ENCODE measurements at regions of chr15 and their contacts with region 1.

Region 1: GRCh38 chr15:92383519-92384326 is 10.0 kb upstream of the ST8SIA2 start:
- DNase-seq: no peak
- ATAC-seq: no peak
- H3K4me3 Mint-ChIP-seq: no peak overlapping the region
- H3K27ac Mint-ChIP-seq: no peak overlapping the region
- H3K4me1 Mint-ChIP-seq: no peaks in the 10 kb centered on the region
- H3K27me3 Mint-ChIP-seq: peaks cover 13% of the 10 kb centered on the region
- CTCF ChIP-seq: no peak

Region 2: DNA sequence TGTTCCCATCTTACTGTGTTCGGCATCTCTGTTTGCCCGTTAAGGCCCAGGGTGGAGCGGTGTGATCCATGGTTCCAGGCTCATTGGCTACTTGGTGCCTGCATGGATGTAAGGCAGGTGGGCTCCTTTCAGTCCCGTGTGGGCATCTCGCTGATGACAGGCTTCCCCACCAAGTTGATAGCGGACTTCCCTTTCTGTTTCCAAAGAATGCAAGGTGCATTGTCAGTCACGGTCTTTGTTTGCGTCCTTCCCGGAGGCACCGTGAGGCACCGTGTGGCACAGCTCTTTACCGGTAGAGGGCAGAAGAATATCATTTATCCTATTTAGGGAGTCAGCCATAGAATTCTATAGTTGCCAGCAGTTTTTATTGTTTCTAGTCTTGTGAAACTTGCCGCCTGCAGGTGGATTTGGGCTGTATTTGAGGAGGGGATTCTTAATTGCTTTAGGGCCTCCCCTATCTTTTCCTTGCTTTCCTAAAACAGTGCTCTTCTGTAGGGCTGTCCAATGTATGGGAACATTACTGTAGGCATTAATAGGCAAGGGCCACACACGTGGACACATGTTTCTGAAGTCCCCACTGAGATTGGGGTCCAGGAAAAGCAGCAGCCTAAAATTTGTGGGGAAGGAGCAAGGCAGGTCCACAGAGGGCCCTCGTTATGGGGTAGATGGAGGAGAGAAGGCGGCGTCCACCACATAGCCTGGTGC is 286.1 kb before region 1 on chr15:
- CTCF ChIA-PET with region 1: no interaction called
- POLR2A ChIA-PET with region 1: no interaction called
- intact Hi-C with region 1: loop called (anchors 5 kb)
- DNase-seq: no peak
- ATAC-seq: peak; percentile 52
- H3K4me3 Mint-ChIP-seq: no peak overlapping the region
- H3K27ac Mint-ChIP-seq: no peak overlapping the region
- H3K4me1 Mint-ChIP-seq: peaks cover 22% of the 10 kb centered on the region
- H3K27me3 Mint-ChIP-seq: no peaks in the 10 kb centered on the region
- CTCF ChIP-seq: no peak

Region 3: DNA sequence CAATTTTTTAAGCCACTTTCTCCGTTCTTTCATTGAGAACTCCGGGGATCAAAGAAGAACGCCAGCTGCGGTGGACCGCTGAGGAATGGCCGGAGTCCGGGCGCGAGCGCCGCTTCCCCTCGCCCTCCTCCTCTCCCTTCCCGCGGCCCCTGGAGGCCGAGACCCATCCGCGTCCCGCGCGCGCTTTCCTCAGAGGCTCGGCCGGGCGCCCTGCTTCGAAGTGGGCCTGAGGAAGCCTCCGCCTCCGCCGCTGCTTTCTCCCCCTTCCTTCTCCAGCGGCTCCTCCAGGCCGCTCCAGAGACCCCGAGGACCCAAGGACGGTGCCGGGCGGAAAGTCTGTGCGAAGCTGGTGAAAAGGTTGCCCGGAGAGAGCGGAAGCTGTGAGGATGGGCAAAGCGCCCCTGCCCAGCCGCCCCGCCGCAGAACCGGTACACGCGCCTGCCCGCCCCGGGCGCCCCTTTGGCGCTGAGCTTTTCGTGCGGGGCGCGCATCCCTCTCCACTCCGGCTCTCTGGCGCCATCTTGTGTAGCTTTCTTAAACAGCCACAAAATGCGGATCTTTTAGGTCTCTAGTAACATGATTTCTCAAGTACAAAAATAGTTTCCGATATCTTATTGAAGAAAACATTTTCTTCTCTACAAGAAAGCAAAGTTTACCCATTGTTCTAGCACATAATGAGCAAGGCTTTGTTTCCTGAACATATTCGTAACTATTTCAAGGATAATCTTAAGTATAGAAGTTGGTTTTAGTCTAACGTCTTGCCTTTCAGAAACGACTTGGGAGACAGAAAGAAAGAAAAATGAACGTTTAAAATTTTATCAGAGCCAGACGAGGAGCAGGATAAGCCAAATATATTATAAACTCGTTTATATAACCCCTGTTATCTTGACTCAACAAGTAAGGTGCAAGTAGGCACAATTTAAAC is 331.0 kb after region 1 on chr15:
- CTCF ChIA-PET with region 1: no interaction called
- POLR2A ChIA-PET with region 1: no interaction called
- intact Hi-C with region 1: no loop called
- DNase-seq: peak; percentile 51
- ATAC-seq: peak; percentile 82
- H3K4me3 Mint-ChIP-seq: peak overlapping the region; percentile 68
- H3K27ac Mint-ChIP-seq: no peak overlapping the region
- H3K4me1 Mint-ChIP-seq: peaks cover 7% of the 10 kb centered on the region
- H3K27me3 Mint-ChIP-seq: peaks cover 39% of the 10 kb centered on the region
- CTCF ChIP-seq: no peak